ENCODE measurements at regions of chr4 and their contacts with region 1.

Region 1: DNA sequence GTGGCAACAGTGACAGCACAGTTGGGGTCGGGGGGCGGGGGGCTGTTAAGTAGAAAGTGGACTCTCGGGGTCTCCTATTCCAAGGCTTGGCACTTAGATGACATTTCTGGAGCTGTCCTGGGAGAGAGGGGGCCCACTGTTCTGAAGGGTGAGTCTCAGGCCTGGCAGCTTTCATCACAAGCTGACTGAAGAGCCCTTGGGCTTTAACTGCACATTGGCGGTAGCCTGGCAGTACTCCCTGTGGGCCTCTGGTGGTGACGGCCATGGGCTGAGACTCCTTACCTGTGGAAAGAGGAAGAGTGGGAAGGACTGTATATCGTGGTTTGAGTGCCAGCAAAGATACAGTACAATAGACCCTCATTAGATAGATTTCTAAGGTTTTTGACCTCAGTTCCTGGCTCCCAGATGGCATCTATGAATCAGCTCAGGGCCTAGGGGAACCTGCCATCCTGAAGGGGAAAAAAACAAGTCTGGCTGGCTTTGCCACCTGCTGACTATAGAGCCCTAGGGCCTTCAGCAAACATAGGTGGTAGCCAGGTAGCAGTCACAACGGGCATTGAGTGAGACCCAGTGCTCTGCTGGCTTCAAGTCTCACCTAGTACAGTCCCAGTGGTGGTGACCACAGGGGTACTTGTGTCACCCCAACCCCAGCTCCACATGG is 88.0 kb downstream of the ANKRD17 start:
- DNase-seq: no peak

Region 2: DNA sequence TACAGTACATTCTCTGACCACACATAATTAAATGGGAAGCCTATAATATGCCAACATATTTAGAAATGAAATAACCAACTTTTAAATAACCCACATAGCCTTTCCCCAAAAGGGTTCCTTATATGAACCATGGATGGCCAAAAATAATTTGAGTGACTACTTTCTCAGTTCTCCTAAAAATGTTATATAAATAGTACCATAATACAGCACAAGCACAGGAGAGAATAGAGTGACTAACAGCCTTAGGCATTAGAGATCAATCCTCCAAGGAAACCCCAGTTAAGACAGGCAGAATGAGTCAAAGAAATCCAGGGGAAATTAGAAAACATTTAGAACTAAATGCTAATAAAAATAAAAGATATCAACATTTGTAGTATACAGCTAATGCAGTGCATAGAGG is 37.7 kb after region 1 on chr4:
- intact Hi-C with region 1: loop called in 1 of 2 experiments (anchors 1 kb)
- DNase-seq: no peak